A549 (cell line): ENCODE measurements at regions of chr7 and their contacts with region 1.

Region 1: DNA sequence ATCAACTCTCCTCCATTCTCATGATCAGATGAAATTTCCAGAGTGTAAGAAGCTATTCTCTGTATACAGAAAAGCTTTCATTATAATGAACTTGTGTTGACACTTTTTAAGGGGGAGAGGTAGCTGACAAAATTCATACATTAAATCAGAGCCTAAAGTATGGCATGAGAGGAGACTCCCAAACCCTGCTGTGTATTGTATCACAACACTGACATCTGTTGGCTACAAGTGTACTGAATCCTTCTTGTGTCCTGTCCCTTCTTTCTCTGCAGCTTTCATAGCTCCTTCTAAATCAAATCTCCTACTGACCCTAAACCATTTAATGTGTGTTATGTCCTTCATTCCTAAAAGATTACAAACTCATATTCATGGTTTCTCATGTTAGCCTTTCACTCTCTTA is 70.9 kb downstream of the GCC1 start:
- DNase-seq: peak; percentile 31 to 54
- ATAC-seq: peak; percentile 90 to 95
- H3K4me3 ChIP-seq: no peak overlapping the region
- H3K27ac ChIP-seq: no peak overlapping the region
- H3K4me1 ChIP-seq: no peaks in the 10 kb centered on the region
- CTCF ChIP-seq: peak; percentile 45
- EP300 ChIP-seq: no peak
- POLR2A ChIP-seq: no peak
- RAD21 ChIP-seq: peak; percentile 66 to 72; a peak in 4 of 5 replicates

Region 2: GRCh38 chr7:126803060-126803665 is 711.3 kb before region 1 on chr7:
- CTCF ChIA-PET with region 1: interaction called, 11 read pairs
- POLR2A ChIA-PET with region 1: no interaction called
- DNase-seq: peak; percentile 22 to 71
- ATAC-seq: peak; percentile 92 to 95; a peak in 5 of 6 replicates
- H3K4me3 ChIP-seq: no peak overlapping the region
- H3K27ac ChIP-seq: no peak overlapping the region
- H3K4me1 ChIP-seq: no peaks in the 10 kb centered on the region
- CTCF ChIP-seq: peak; percentile 64
- EP300 ChIP-seq: no peak
- POLR2A ChIP-seq: no peak
- RAD21 ChIP-seq: peak; percentile 66 to 78

Region 3: DNA sequence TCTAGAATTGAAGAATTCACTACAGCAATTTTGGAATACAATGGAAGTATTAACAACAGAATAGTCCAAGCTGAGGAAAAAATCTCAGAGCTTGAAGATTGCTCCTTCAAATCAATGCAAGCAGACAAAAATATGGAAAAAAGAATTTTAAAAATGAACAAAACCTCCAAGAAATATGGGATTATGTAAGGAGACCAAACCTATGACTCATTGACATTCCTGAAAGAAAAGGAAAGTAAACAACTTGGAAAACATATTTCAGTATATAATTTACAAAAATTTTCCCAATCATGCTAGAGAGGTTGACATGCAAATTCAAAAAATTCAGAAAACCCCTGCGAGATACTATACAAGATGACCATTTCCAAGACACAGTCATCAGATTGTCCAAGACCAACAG is 219.7 kb before region 1 on chr7:
- CTCF ChIA-PET with region 1: no interaction called
- POLR2A ChIA-PET with region 1: no interaction called
- DNase-seq: no peak
- ATAC-seq: no peak
- H3K4me3 ChIP-seq: no peak overlapping the region
- H3K27ac ChIP-seq: no peak overlapping the region
- H3K4me1 ChIP-seq: no peaks in the 10 kb centered on the region
- CTCF ChIP-seq: no peak
- EP300 ChIP-seq: no peak
- POLR2A ChIP-seq: no peak
- RAD21 ChIP-seq: no peak

Region 4: DNA sequence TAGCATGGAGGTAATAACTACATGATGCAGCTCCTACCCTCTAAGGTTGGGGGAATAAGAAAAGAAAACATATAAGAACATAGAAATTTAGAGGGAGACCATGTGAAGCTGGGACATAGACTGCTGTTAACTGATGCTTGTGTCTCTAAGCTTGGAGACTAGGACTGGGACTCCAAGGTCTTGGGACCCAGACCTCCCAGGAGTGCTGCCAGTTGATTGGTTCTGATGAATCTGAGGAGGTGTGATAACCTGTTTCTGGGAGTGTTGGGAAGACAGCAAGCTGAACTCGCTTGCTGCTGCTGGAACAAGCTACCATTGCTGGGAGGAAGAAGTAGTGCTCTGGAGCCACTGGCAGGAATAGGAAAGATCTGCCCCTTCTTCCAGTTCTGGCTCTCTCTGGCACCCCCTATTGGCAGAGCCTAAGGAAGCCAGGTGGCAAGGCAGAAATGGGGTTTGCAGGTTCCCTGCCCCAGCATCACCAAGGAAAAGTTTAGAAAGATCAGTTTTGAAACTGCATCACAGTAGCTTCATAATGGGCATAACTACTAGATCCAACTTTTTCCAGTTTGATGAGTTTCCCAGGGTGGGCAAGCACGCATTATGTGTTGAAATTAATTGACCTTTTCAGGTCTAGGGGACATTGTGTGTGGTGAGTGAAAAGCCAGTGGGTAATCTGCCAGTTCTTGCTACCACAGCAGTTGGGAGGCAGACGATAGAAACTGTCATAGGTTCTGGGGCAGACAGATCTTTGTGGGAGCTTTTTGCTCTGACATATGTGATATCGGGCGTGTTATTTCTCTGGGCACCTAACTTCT is 278.2 kb after region 1 on chr7:
- CTCF ChIA-PET with region 1: no interaction called
- POLR2A ChIA-PET with region 1: no interaction called
- DNase-seq: peak; percentile 19 to 48
- ATAC-seq: peak; percentile 51 to 88; a peak in 4 of 6 replicates
- H3K4me3 ChIP-seq: no peak overlapping the region
- H3K27ac ChIP-seq: no peak overlapping the region
- H3K4me1 ChIP-seq: peaks cover 9% of the 10 kb centered on the region
- CTCF ChIP-seq: peak; percentile 46
- EP300 ChIP-seq: no peak
- POLR2A ChIP-seq: no peak
- RAD21 ChIP-seq: peak in 1 of 2 experiments; percentile 39; a peak in 2 of 5 replicates